Activated CD4-positive, alpha-beta T cell treated with anti-CD3 and anti-CD28 coated beads, Interleukin-2, amount 10 ng/mL, durations not matched to agents 24 days and 14 days (primary cell): ENCODE measurements at regions of chr11 and their contacts with region 1.

Region 1: DNA sequence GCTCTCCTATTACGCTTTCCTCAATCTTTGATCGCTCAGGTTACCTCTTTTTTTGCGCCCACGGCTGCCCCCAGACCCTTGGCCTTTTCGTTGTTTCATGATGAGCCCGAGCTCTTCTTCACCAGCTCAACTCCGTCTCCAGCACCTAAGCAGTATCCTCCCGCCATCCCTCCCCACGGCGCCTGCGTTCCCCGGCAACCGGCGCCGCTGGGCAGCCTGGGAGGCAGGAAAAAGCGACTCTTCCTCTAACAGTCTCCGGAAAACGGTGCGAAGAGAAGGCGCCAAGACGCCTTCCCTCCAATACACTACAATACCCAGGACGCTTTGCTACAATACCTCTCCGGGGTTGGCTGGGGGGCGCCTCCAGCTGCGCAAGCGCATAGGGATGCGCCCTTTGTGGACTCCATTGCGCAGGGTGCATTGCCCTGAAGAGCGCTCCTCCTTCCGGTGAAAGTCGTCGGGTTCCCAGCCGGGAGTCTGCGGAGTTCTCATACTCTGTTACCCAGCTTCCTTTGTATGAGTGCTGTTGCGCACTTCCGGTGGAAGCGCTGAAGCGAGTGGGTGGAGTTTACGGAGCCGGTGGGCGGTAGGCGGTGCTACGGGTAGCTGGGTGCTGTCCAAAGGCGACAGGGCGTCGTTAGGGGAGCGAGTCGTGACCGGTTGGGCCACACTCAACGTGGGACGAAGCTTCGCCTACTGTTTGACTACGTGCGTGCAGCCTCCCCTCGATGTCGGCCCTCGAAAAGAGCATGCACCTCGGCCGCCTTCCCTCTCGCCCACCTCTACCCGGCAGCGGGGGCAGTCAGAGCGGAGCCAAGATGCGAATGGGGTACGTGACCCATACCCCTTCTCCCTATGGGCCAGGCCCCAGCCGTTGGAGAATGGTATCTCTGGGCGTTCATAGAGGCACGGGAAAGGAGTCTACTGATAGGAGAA is at the starts of genes C2CD3 and PPME1:
- DNase-seq: peak; percentile 100
- H3K4me3 Mint-ChIP-seq: no peak within 1 kb of the TSS
- H3K27ac Mint-ChIP-seq: no peak within 1 kb of the TSS
- H3K4me1 Mint-ChIP-seq: peaks cover 11% of the 10 kb centered on the region
- H3K27me3 Mint-ChIP-seq: no peaks in the 10 kb centered on the region
- total RNA-seq, gene C2CD3: 35.1 and 37.4 TPM in 2 replicates
- total RNA-seq, gene PPME1: 66.3 and 69.6 TPM in 2 replicates

Region 2: DNA sequence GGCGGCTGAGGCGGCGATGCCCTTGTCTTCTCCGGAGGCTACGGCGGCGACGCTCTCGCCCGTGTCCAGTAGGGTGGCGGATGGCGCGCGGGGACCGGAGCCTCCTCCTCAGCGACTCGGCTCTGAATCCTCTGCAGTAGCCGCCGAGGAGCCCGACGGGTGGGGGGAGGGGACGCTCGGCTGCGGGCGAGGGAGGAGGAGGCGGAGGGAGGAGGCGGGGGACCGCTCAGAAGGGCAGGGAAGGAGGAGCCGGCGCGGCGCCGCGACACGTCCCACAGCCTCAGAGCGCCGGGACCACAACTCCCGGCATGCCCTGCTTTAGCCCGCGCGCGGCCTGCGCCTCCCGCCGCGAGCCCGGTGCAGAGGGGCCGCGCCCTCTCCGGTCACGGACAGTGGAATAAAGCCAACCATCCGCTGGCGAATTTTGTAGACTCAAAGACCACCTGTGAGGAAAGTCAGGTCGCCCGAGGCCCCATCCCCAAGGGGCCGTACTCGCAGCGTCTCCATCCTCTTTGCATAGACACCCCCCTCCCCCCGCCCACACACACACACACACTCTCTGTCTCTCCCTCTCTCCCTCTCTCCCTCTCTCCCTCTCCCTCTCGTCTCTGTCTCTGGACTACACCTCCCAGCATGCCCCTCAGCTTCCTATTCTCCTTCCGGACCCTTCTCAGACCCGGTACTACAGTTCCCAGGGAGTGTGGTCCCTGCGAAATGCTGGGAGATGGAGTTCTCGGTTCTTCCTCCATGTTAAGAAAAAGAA is 572.8 kb before region 1 on chr11 and contains the start of gene FAM168A:
- intact Hi-C with region 1: loop called (anchors 5 kb)
- DNase-seq: peak; percentile 96
- H3K4me3 Mint-ChIP-seq: peak within 1 kb of the TSS; percentile 93
- H3K27ac Mint-ChIP-seq: peak within 1 kb of the TSS; percentile 92
- H3K4me1 Mint-ChIP-seq: peaks cover 42% of the 10 kb centered on the region
- H3K27me3 Mint-ChIP-seq: no peaks in the 10 kb centered on the region
- total RNA-seq, gene FAM168A: 17.4 and 19.8 TPM in 2 replicates

Region 3: GRCh38 chr11:73787643-73788537 is 383.1 kb before region 1 on chr11 and contains the start of gene MRPL48:
- intact Hi-C with region 1: loop called (anchors 5 kb)
- DNase-seq: peak; percentile 96
- H3K4me3 Mint-ChIP-seq: peak within 1 kb of the TSS; percentile 99
- H3K27ac Mint-ChIP-seq: peak within 1 kb of the TSS; percentile 95
- H3K4me1 Mint-ChIP-seq: peaks cover 14% of the 10 kb centered on the region
- H3K27me3 Mint-ChIP-seq: no peaks in the 10 kb centered on the region
- total RNA-seq, gene MRPL48: 67.2 and 69.0 TPM in 2 replicates

Region 4: DNA sequence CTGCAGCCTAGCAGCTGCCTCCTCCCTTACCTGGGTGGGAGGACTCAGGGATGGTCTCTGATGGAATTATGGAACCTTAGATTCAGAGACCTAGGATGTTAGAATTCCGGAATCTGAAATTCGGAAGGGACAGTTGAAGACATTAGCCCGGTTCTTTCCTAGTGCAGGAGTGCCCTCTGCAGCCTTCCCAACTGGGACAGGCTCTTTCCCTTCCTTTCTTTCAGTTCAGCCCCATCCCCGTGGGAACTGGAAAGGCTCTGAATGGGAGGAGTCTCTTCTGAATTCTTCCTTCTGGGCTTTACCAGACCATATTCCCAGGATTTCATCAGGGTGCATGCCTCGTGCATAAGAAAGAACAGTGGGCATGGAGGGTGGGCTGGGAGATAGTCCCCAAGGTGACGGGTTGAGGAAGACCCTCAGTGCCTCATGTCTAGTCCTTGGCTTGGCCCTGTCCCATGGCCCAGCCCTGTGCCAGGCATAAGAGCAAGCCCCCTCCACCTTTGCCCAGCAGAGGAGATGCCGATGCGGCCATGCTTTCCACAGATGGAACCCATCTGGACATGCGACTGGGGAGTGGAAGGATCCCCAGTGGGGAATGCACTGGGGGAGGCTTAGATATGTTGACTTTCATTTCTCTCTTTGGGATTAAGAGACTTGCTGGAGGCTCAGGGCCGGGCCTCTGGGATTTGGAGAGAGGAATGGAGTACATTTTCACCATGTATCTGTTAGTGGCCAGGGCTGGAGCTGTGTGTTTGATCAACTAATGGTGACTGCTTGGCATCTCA is 205.7 kb before region 1 on chr11:
- intact Hi-C with region 1: loop called (anchors 1 kb)
- DNase-seq: no peak
- H3K4me3 Mint-ChIP-seq: peak overlapping the region; percentile 69
- H3K27ac Mint-ChIP-seq: peak overlapping the region; percentile 12
- H3K4me1 Mint-ChIP-seq: peaks cover 28% of the 10 kb centered on the region
- H3K27me3 Mint-ChIP-seq: no peaks in the 10 kb centered on the region

Region 5: DNA sequence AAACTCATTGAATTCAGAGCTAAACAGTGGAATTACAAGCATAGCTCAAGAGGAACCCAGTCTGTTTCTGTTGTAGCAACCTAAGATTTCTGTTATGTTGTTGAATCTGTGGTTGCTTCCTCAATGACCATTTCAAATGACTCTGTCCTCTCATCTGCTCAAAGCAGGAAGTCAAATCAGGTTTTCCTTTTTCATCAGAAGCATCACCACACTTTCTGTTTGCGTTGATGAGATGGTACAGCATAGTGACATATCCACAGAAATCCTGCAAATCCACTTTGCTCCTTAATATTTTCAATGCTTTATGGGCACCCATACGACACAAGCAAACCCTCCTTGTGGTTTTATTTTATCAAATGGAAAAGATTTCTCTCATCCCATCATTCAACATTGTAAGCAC is 175.7 kb before region 1 on chr11:
- intact Hi-C with region 1: loop called (anchors 1 kb)
- DNase-seq: peak; percentile 86
- H3K4me3 Mint-ChIP-seq: peak overlapping the region; percentile 80
- H3K27ac Mint-ChIP-seq: peak overlapping the region; percentile 97
- H3K4me1 Mint-ChIP-seq: peaks cover 41% of the 10 kb centered on the region
- H3K27me3 Mint-ChIP-seq: no peaks in the 10 kb centered on the region

Region 6: GRCh38 chr11:74398244-74399159 is 227.5 kb after region 1 on chr11 and contains the start of gene PGM2L1:
- intact Hi-C with region 1: loop called (anchors 5 kb)
- DNase-seq: peak; percentile 97
- H3K4me3 Mint-ChIP-seq: peak within 1 kb of the TSS; percentile 97
- H3K27ac Mint-ChIP-seq: peak within 1 kb of the TSS; percentile 100
- H3K4me1 Mint-ChIP-seq: peaks cover 24% of the 10 kb centered on the region
- H3K27me3 Mint-ChIP-seq: no peaks in the 10 kb centered on the region
- total RNA-seq, gene PGM2L1: 4.7 and 4.9 TPM in 2 replicates